K562 (cell line): ENCODE measurements at regions of chr17 and their contacts with region 1.

Region 1: DNA sequence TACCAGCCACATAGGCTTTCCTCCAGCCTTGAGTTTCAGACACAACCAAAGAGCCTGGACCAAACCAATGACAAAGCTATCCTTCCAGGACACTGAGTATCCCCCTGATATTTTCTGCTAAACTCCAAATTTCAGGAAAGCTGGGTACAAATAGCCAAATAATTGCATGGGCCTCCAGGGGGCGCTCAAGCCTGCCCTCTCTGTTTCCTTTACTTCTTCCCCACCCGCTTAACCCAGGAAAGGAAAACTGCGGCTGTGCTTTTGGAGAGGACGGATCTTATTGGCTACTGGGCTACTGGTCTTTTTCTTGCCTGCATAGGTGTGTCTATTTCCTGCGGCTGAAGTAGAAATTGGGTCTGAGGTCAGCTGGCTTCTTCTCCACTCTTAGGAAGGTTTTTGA is 30.1 kb downstream of the GNGT2 start:
- DNase-seq: peak; percentile 74 to 78 (median 76)
- ATAC-seq: peak; percentile 87
- H3K4me3 ChIP-seq: no peak overlapping the region
- H3K27ac ChIP-seq: no peak overlapping the region
- H3K4me1 ChIP-seq: no peaks in the 10 kb centered on the region; a peak in 1 of 5 replicates
- H3K27me3 ChIP-seq: no peaks in the 10 kb centered on the region
- CTCF ChIP-seq: peak; percentile 80 to 93 (median 91)
- EP300 ChIP-seq: no peak
- POLR2A ChIP-seq: no peak
- RAD21 ChIP-seq: peak; percentile 49 to 82

Region 2: DNA sequence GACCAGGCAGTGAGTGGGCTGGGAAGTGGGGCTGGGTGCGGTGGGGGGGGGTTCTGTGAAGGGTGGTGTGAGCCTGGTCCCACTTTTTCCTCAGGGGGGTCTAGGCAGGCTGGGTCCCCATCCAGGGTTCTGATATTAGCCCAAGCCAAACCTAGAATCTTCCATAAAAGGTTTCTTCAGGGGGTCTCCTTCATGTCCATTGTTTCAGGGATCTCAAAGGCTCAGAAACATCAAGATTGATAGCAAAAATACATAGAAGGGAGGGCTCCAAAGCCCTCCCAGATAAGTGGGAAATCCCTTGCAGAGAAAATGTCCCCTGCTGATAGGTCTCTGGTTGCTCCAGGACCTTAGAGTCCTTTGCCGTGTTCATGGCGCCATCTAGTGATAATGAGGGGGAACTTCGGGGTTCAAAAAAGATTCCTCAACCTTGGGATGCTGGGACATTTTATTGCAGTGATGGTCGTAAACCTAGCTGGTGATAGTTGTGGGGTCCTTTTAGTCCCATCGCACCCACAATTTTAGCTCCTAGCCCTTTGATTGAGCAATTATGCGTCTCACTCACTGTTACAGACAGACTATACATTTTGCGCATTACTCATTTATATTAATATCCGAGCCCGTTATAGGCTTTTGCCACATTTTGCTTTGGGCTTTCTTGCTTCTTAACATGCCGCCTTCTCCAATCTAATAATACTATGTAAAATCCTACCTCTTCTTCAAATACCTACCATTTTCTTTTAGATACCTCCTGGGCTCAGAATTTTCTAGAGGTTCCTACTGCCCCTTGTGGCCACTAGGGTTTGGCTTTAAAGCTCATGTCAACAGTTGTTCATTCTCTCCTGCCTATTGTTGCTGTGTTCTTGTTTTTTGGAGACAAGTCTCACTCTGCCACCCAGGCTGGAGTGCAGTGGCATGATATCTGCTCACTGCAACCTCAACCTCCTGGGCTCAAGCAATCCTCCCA is 148.1 kb before region 1 on chr17:
- CTCF ChIA-PET with region 1: no interaction called
- POLR2A ChIA-PET with region 1: no interaction called
- in situ Hi-C with region 1: no loop called
- intact Hi-C with region 1: no loop called
- DNase-seq: peak; percentile 71 to 85 (median 79)
- ATAC-seq: peak; percentile 91
- H3K4me3 ChIP-seq: no peak overlapping the region
- H3K27ac ChIP-seq: no peak overlapping the region
- H3K4me1 ChIP-seq: peaks cover 2 to 13% of the 10 kb centered on the region in 2 experiments; a peak in 4 of 5 replicates
- H3K27me3 ChIP-seq: no peaks in the 10 kb centered on the region
- CTCF ChIP-seq: peak; percentile 79 to 95 (median 85)
- EP300 ChIP-seq: no peak
- POLR2A ChIP-seq: no peak
- RAD21 ChIP-seq: peak; percentile 90 to 94

Region 3: DNA sequence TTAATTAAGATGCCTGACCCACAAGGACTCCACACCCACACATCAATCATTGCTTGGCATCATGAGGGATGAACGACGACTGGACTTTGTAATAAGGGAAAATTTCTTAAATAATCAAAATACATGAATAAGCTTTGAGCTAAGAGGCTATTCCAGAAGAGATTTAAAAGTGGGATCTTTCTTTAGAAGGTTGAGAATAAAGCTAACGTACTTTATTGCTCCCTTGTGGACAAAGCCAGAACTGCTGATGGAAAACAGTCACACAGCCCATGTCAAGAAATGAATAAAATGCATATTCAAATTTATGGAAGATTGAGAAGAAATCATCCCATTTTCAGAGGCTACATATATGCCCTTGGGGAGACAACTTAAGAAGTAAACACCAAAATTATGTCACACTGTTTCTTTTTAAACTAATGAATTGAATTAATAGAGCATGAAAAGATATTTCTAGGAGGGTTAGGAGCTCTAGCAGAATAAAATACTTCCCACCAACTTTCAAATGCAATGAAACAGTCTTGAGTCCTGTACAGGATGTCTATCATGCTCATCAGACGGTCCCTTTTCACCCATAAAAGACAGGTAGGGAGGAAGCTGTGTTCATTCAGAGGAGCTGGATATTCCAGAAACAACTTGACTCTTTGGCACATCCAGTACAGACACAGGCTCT is 110.5 kb after region 1 on chr17:
- CTCF ChIA-PET with region 1: interaction called, 7 read pairs
- POLR2A ChIA-PET with region 1: no interaction called
- in situ Hi-C with region 1: no loop called
- intact Hi-C with region 1: loop called (anchors 5 kb)
- DNase-seq: peak; percentile 32 to 57 (median 48)
- ATAC-seq: peak; percentile 78
- H3K4me3 ChIP-seq: no peak overlapping the region
- H3K27ac ChIP-seq: no peak overlapping the region
- H3K4me1 ChIP-seq: peaks cover 3 to 8% of the 10 kb centered on the region in 2 experiments; a peak in 3 of 5 replicates
- H3K27me3 ChIP-seq: peaks cover 3 to 4% of the 10 kb centered on the region in 2 experiments; a peak in 3 of 5 replicates
- CTCF ChIP-seq: peak; percentile 51 to 81 (median 64); a peak in 5 of 6 replicates
- EP300 ChIP-seq: no peak
- POLR2A ChIP-seq: no peak
- RAD21 ChIP-seq: peak; percentile 56 to 79

Region 4: GRCh38 chr17:49399995-49400394 is 219.7 kb after region 1 on chr17:
- CTCF ChIA-PET with region 1: no interaction called
- POLR2A ChIA-PET with region 1: no interaction called
- in situ Hi-C with region 1: no loop called
- intact Hi-C with region 1: loop called (anchors 5 kb)
- DNase-seq: no peak
- ATAC-seq: no peak
- H3K4me3 ChIP-seq: no peak overlapping the region
- H3K27ac ChIP-seq: no peak overlapping the region
- H3K4me1 ChIP-seq: no peaks in the 10 kb centered on the region; a peak in 1 of 5 replicates
- H3K27me3 ChIP-seq: no peaks in the 10 kb centered on the region; a peak in 1 of 5 replicates
- CTCF ChIP-seq: no peak
- EP300 ChIP-seq: no peak
- POLR2A ChIP-seq: no peak
- RAD21 ChIP-seq: no peak